ENCODE measurements at regions of chr13 and their contacts with region 1.

Region 1: GRCh38 chr13:43804461-43805070 is 17.8 kb upstream of the ENOX1 start:
- ATAC-seq: peak; percentile 36 to 93 (median 70)
- H3K4me3 ChIP-seq: no peak overlapping the region
- H3K27ac ChIP-seq: no peak overlapping the region
- H3K4me1 ChIP-seq: peaks cover 4 to 11% of the 10 kb centered on the region in 2 donors

Region 2: DNA sequence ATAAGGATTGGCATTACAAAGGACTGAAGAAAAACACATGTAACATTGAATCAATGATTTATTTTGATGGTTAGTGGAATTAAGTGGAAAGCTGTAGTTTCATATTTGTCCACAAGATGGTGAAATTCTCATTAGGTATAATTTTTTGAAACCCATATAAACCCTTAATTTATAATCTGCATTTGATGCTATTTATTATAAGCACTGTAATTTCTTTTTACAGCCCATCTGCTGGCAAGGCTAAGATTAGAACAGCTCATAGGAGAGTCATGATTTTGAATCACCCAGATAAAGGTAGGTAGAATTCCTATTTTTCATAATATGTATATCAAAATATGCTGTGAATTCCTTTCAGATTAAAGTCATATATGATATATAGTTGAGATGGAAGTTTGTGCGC is 719.0 kb before region 1 on chr13:
- in situ Hi-C with region 1: loop called in 3 of 9 experiments (anchors 25 kb)
- ATAC-seq: no peak
- H3K4me3 ChIP-seq: no peak overlapping the region
- H3K27ac ChIP-seq: no peak overlapping the region
- H3K4me1 ChIP-seq: peaks cover 0 to 2% of the 10 kb centered on the region in 2 donors

Region 3: DNA sequence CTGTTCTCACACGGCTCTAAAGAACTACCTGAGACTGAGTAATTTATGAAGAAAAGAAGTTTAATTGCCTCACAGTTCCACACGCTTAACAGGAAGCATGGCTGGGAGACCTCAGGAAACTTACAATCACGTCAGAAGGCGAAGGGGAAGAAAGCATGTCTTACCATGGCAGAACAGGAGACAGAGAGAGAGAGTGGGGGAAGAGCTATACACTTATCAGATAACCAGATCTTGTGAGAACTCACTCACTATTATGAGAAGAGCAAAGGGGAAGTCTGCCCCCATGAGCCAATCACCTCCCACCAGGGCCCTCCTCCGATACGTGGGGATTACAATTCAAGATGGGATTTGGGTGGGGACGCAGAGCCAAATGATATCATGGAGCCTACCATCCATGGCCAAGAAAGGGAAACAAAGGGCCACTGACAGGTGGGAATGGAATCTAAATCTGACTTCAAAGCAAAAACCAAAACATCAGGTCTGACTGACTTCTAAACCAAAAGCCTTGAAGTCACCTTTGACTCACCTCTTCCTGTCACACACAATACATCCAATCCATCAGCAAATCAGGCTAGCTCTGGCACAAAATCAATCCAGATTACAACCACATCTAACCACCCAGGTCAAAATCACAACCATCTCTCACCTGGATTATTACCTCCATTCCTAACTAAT is 207.5 kb before region 1 on chr13:
- in situ Hi-C with region 1: no loop called
- ATAC-seq: no peak
- H3K4me3 ChIP-seq: no peak overlapping the region
- H3K27ac ChIP-seq: no peak overlapping the region
- H3K4me1 ChIP-seq: no peaks in the 10 kb centered on the region

Region 4: GRCh38 chr13:43611281-43612273 is 193.0 kb before region 1 on chr13:
- in situ Hi-C with region 1: no loop called
- ATAC-seq: no peak
- H3K4me3 ChIP-seq: no peak overlapping the region
- H3K27ac ChIP-seq: no peak overlapping the region
- H3K4me1 ChIP-seq: no peaks in the 10 kb centered on the region

Measured in motor neuron (in vitro differentiated cells).